ENCODE measurements at regions of chr10 and their contacts with region 1.

Region 1: GRCh38 chr10:93554760-93555432 is 11.6 kb upstream of the FFAR4 start:
- DNase-seq: peak; percentile 55
- H3K4me3 ChIP-seq: no peak overlapping the region
- H3K27ac ChIP-seq: no peak overlapping the region
- H3K4me1 ChIP-seq: no peaks in the 10 kb centered on the region
- H3K27me3 ChIP-seq: no peaks in the 10 kb centered on the region
- CTCF ChIP-seq: peak; percentile 82 to 89

Region 2: DNA sequence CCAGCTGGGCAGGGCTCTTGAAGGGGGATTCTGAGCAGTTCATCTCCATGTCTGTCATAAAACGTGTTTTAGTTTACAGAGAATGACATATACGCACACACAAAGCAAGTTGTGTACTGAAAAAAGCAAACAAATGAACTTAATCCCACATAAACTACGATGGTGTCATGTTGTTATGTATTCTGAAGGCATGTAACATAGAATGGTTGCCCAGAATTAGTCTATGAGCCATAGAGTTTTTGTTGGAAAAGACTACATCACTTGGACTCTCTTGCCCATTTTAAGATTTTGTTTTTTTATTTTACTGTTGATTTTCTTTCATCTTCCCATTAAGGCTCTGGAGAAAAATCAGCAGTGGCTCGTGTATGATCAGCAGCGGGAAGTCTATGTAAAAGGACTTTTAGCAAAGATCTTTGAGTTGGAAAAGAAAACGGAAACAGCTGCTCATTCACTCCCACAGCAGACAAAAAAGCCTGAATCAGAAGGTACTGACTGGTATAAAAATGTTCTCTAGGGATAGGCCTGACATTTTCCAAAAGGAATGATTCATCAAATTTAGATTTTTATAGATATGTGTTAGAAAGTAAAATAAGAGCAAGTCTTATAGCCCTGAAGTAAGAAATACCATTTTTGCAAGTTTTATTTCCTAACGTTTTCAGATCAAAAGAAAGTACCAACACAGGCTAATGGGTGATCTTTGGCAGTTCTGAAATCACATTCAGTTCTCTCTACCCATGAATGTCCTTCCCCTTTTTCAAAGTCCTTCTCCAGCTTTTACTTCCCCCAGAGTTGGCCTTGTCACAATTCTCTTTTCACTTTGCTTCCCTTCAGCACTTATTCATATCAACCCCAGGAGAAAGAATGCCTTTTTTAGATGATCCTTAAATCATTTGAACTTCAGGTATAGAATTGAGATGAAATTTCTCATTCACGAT is 39.6 kb before region 1 on chr10:
- CTCF ChIA-PET with region 1: no interaction called
- dilution Hi-C with region 1: loop called (anchors 5 kb)
- in situ Hi-C with region 1: no loop called
- intact Hi-C with region 1: no loop called
- DNase-seq: no peak
- H3K4me3 ChIP-seq: no peak overlapping the region
- H3K27ac ChIP-seq: no peak overlapping the region
- H3K4me1 ChIP-seq: no peaks in the 10 kb centered on the region
- H3K27me3 ChIP-seq: no peaks in the 10 kb centered on the region
- CTCF ChIP-seq: no peak

Region 3: GRCh38 chr10:93589648-93590562 is 35.0 kb after region 1 on chr10:
- CTCF ChIA-PET with region 1: no interaction called
- dilution Hi-C with region 1: no loop called
- in situ Hi-C with region 1: no loop called
- intact Hi-C with region 1: no loop called
- DNase-seq: no peak
- H3K4me3 ChIP-seq: no peak overlapping the region
- H3K27ac ChIP-seq: no peak overlapping the region
- H3K4me1 ChIP-seq: no peaks in the 10 kb centered on the region
- H3K27me3 ChIP-seq: peaks cover 2% of the 10 kb centered on the region
- CTCF ChIP-seq: no peak

Region 4: DNA sequence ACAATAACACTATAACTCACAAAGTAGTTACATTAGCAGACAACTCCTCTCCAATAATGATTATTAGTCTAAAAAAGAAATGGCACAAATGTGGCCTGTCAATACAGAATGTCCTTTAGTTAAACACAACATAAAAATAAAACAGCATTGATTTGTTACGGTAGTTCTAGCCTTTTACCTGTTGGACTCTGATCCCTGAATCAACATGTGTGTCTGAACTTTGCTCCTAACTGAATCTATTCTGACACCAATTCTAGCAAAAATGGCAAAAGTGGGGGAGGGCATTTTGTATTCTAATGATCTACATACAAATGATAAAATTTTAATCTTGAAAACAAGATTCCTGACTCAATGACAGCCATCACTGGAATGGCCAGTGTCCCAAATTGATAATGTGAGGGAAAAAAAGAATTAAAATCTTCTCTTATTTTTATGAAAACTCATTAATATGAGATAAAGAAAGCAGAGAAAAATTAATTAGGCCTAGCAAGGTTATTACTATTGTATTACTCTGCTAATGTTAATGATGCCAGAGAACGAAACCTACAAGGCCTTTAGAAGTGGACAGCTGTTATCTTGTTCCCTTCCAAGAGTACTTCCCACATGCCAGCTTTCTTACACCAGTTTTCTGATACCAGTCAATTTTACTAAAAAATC is 117.3 kb after region 1 on chr10:
- CTCF ChIA-PET with region 1: no interaction called
- dilution Hi-C with region 1: no loop called
- in situ Hi-C with region 1: loop called in 1 of 2 experiments (anchors 10 kb)
- intact Hi-C with region 1: no loop called
- DNase-seq: no peak
- H3K4me3 ChIP-seq: no peak overlapping the region
- H3K27ac ChIP-seq: no peak overlapping the region
- H3K4me1 ChIP-seq: no peaks in the 10 kb centered on the region
- H3K27me3 ChIP-seq: no peaks in the 10 kb centered on the region
- CTCF ChIP-seq: no peak

Region 5: DNA sequence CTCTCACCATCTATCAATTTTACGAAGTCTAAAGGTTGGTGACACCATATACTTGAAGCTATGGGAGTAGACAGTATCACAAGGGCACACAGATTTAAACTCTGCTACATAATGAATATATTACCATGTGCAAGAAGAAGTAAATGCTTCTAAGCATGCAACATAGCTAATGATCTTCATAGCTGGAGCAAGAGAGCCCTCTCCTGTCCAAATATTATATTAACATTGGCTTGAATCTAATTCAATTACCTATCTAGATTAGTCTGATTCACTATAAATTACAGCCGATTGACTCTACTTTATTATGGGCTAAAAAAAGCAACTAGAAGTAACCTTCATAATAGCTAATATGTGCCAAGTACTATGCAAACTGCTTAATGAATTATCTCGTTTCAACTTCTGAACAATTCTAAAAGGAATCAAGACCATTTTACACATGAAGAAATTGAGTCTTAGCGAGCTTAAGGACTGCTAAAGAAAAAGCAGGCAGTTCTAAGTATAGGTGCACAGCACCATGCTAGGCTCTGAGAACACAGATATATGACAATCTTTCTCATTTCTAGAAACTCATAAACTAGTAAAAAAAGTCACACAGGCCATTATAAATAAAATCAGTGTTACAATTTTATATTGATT is 125.6 kb after region 1 on chr10:
- CTCF ChIA-PET with region 1: interaction called, 23 read pairs
- dilution Hi-C with region 1: no loop called
- in situ Hi-C with region 1: loop called in 1 of 2 experiments (anchors 10 kb)
- intact Hi-C with region 1: loop called (anchors 1 kb)
- DNase-seq: peak; percentile 35
- H3K4me3 ChIP-seq: no peak overlapping the region
- H3K27ac ChIP-seq: no peak overlapping the region
- H3K4me1 ChIP-seq: no peaks in the 10 kb centered on the region
- H3K27me3 ChIP-seq: no peaks in the 10 kb centered on the region
- CTCF ChIP-seq: peak; percentile 24 to 44